SK-N-SH (cell line): ENCODE measurements at regions of chrX and their contacts with region 1.

Region 1: DNA sequence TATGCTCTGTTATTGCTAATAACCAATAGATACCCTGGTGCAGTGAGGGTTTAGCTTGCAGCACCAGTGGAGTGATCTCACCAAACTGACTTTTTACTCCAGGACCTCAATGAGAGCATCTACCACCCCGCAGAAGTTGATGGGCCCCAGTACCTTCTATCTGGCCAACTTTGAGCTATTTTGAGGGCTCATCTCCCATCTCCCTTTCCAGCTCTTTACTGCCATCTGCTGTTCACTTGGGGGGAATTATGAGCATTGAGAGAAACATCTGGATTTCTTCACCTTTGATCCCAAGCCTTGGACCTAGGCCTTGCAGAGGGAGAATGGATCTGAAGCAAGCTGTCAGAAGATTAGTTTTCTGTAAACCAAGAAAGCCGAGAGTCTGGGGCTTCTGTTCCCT is 143.6 kb downstream of the TMEM164 start:
- DNase-seq: peak; percentile 55
- H3K4me3 ChIP-seq: no peak overlapping the region
- H3K27ac ChIP-seq: no peak overlapping the region; a peak in 1 of 4 replicates
- H3K4me1 ChIP-seq: no peaks in the 10 kb centered on the region; a peak in 1 of 4 replicates
- H3K27me3 ChIP-seq: no peaks in the 10 kb centered on the region
- CTCF ChIP-seq: peak; percentile 79
- EP300 ChIP-seq: no peak
- RAD21 ChIP-seq: peak; percentile 64

Region 2: GRCh38 chrX:109890895-109891502 is 255.5 kb before region 1 on chrX:
- CTCF ChIA-PET with region 1: interaction called, 11 read pairs
- POLR2A ChIA-PET with region 1: no interaction called
- DNase-seq: peak; percentile 65
- H3K4me3 ChIP-seq: peak overlapping the region in 1 of 2 experiments; percentile 30; a peak in 1 of 4 replicates
- H3K27ac ChIP-seq: no peak overlapping the region
- H3K4me1 ChIP-seq: no peaks in the 10 kb centered on the region; a peak in 1 of 4 replicates
- H3K27me3 ChIP-seq: no peaks in the 10 kb centered on the region
- CTCF ChIP-seq: peak; percentile 90
- EP300 ChIP-seq: no peak
- RAD21 ChIP-seq: peak; percentile 59

Region 3: GRCh38 chrX:109911046-109911445 is 235.5 kb before region 1 on chrX:
- CTCF ChIA-PET with region 1: interaction called, 35 read pairs
- POLR2A ChIA-PET with region 1: no interaction called
- DNase-seq: peak; percentile 21
- H3K4me3 ChIP-seq: no peak overlapping the region
- H3K27ac ChIP-seq: no peak overlapping the region
- H3K4me1 ChIP-seq: no peaks in the 10 kb centered on the region
- H3K27me3 ChIP-seq: no peaks in the 10 kb centered on the region; the same call in 1 of the 2 replicates
- CTCF ChIP-seq: peak; percentile 69
- EP300 ChIP-seq: no peak
- RAD21 ChIP-seq: peak; percentile 65

Region 4: DNA sequence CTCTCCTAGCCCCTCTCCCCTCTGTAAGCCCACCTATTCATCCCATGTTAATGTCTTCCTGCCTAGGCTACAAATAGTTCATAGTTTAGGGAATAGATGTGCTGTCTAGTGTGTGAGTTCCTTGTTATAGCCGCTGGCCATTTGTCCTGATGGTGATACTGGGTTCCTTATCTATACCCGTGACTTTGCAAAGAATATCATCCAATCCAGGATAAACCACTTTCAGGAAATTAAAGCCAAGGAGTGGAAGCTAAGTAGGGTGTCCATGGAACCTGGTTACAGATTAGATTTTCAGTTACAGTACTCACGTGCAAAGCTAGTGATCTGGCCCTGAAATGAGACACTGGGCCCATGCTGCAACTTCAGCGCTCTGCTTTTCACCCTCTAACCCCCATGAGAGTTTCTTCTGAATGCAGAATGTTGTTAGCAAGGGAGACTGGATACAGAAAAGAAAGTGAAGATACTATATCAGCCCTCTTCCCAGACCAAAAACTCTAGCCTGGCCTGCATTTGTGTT is 32.2 kb before region 1 on chrX:
- CTCF ChIA-PET with region 1: interaction called, 16 read pairs
- POLR2A ChIA-PET with region 1: no interaction called
- DNase-seq: no peak
- H3K4me3 ChIP-seq: no peak overlapping the region
- H3K27ac ChIP-seq: no peak overlapping the region
- H3K4me1 ChIP-seq: no peaks in the 10 kb centered on the region
- H3K27me3 ChIP-seq: no peaks in the 10 kb centered on the region
- CTCF ChIP-seq: no peak
- EP300 ChIP-seq: no peak
- RAD21 ChIP-seq: no peak

Region 5: GRCh38 chrX:110125446-110126162 is 20.9 kb before region 1 on chrX:
- CTCF ChIA-PET with region 1: interaction called, 15 read pairs
- POLR2A ChIA-PET with region 1: no interaction called
- DNase-seq: peak; percentile 24
- H3K4me3 ChIP-seq: no peak overlapping the region
- H3K27ac ChIP-seq: peak overlapping the region in 1 of 2 experiments; percentile 17; a peak in 2 of 4 replicates
- H3K4me1 ChIP-seq: peaks cover 0 to 9% of the 10 kb centered on the region in 2 experiments; a peak in 1 of 4 replicates
- H3K27me3 ChIP-seq: no peaks in the 10 kb centered on the region
- CTCF ChIP-seq: peak; percentile 36
- EP300 ChIP-seq: no peak
- RAD21 ChIP-seq: peak; percentile 59

Region 6: DNA sequence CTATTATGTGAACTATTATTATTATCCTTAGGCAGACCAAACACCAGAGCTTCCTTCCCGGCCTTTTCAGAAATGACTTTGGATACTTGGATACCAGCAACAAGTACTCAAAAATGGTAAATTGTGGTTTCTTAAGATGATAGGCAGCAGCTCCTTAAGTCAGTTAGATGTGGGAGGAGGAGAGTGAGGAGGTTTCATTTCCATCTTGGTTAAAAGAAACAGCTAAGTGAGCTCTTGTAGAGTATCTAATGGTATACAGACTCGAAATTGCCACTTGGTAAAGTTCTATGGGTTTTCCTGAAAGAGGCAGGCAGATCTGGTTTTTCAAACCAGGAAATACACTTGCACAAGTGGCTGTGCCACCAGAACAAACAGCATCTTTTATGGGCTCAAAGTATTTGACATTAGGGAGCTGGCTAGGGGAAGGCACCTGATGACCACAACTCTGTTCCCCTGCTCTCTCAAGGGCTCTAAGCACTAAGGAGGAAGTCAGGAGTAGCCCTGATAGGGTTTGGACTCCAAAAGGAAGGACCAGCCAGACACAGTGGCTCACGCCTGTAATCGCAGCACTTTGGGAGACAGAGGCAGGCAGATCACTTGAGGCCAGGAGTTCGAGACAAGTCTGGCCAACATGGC is 12.7 kb before region 1 on chrX:
- CTCF ChIA-PET with region 1: interaction called, 21 read pairs
- POLR2A ChIA-PET with region 1: no interaction called
- DNase-seq: no peak
- H3K4me3 ChIP-seq: no peak overlapping the region
- H3K27ac ChIP-seq: no peak overlapping the region
- H3K4me1 ChIP-seq: peaks cover 0 to 7% of the 10 kb centered on the region in 2 experiments; a peak in 1 of 4 replicates
- H3K27me3 ChIP-seq: no peaks in the 10 kb centered on the region
- CTCF ChIP-seq: no peak
- EP300 ChIP-seq: no peak
- RAD21 ChIP-seq: no peak

Region 7: DNA sequence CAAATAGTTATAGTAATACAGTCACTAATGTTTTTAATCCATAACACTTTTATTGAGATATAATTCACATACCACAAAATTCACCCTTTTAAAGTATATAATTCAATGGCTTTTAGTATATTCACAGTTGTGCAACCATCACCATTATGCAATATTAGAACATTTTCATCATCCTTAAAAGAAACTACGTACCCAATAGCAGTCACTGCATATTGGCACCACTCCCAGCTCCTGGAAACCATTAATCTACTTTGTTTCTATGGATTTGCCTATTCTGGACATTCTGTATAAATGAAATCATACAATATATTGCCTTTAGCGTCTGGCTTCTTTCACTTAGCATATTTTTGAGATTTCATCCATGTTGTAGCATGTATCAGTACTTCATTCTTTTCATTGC is 72.1 kb after region 1 on chrX:
- CTCF ChIA-PET with region 1: no interaction called
- POLR2A ChIA-PET with region 1: no interaction called
- DNase-seq: no peak
- H3K4me3 ChIP-seq: no peak overlapping the region
- H3K27ac ChIP-seq: no peak overlapping the region
- H3K4me1 ChIP-seq: peaks cover 0 to 3% of the 10 kb centered on the region in 2 experiments; a peak in 2 of 4 replicates
- H3K27me3 ChIP-seq: no peaks in the 10 kb centered on the region
- CTCF ChIP-seq: no peak
- EP300 ChIP-seq: no peak
- RAD21 ChIP-seq: no peak

Region 8: GRCh38 chrX:110412971-110413721 is 266.6 kb after region 1 on chrX:
- CTCF ChIA-PET with region 1: interaction called, 315 read pairs
- POLR2A ChIA-PET with region 1: no interaction called
- DNase-seq: peak; percentile 74
- H3K4me3 ChIP-seq: peak overlapping the region; percentile 12 to 17; a peak in 3 of 4 replicates
- H3K27ac ChIP-seq: no peak overlapping the region; a peak in 1 of 4 replicates
- H3K4me1 ChIP-seq: peaks cover 0 to 11% of the 10 kb centered on the region in 2 experiments; a peak in 1 of 4 replicates
- H3K27me3 ChIP-seq: no peaks in the 10 kb centered on the region
- CTCF ChIP-seq: peak; percentile 87
- EP300 ChIP-seq: no peak
- RAD21 ChIP-seq: peak; percentile 72